ENCODE measurements at regions of chr19 and their contacts with region 1.

Region 1: DNA sequence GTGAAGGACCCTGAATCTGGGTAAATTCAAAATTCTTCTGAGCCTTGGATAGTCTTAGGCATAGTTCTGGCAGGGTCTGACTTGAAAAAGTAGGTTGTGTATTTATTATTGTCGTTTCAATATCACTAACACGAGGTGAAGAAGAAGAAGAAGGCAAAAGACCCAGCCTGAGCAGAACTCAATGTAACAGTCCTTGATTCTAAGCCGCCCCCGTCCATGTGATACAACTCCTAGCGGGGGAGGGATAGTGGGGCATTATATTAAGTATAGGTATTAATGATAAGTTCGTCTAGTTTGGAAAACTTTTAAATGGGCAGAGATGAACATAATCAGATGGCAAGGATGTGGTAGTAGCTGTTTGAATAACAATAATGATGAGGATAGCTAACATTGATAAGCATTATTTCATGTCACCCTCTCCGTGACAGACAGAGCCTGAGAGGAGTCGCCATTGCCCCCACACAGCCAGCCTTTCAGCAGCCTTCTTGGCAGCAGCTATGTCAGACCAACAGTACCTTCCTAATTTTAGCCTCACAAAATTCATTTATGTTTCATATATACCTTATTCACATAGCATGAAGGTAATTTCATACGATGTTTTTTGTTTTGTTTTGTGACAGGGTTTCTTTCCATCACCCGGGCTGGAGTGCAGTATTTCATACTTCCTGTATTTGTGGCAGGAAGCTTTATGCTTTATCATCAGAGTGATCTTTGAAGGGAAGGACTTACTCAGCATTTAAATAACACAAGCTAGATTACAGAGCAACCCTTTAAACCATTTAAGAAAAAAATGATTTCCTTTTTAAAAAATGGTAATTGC is 64.4 kb upstream of the NPAS1 start:
- DNase-seq: peak; percentile 46
- H3K4me3 Mint-ChIP-seq: peak overlapping the region; percentile 75
- H3K27ac Mint-ChIP-seq: peak overlapping the region; percentile 92
- H3K4me1 Mint-ChIP-seq: peaks cover 68% of the 10 kb centered on the region
- H3K27me3 Mint-ChIP-seq: no peaks in the 10 kb centered on the region

Region 2: DNA sequence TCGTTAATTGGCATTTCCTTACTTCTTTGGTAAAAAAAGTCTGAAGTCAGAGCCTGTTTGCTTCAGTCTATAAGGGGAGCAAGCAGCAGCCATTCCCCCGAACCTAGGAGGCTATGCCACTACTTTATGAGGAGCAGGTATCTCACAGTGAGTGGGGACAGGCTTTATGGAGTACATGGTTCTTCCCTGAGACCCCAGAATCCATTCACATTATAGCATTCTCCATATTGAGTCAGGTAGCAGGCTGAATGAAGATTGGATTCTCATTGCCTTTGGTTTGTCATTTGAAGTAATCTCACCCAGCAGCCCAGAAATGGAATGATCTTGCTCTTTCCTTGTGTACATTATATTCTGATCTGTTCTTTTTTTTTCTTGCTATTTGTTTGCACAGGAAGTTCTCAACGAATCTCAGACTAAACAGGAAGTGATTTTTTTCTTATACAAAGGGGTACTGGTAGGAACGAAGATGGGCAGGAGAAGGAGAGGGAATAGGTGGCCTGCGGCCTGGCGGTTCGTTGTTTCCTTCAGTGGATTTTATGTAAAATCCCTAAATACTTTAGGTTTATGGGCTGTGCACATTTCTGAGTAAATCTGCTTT is 20.0 kb before region 1 on chr19:
- intact Hi-C with region 1: loop called (anchors 2 kb)
- DNase-seq: no peak
- H3K4me3 Mint-ChIP-seq: peak overlapping the region; percentile 47
- H3K27ac Mint-ChIP-seq: peak overlapping the region; percentile 52
- H3K4me1 Mint-ChIP-seq: peaks cover 40% of the 10 kb centered on the region
- H3K27me3 Mint-ChIP-seq: no peaks in the 10 kb centered on the region

Measured in activated T-helper 2 cell treated with anti-CD3 and anti-CD28 coated beads, Interferon-gamma antibody, Interleukin-2, Interleukin-4, amounts not matched to agents 10 μg/mL and 5 μg/mL and 100 μg/mL, durations not matched to agents 14 hours and 24 hours and 36 hours (primary cell).